Colonic mucosa (tissue), 4 donors: ENCODE measurements at regions of chr12 and their contacts with region 1.

Region 1: GRCh38 chr12:85476756-85477155 is 196.7 kb downstream of the ALX1 start:
- DNase-seq: no peak
- H3K4me3 ChIP-seq: no peak overlapping the region
- H3K27ac ChIP-seq: no peak overlapping the region
- H3K4me1 ChIP-seq: no peaks in the 10 kb centered on the region
- H3K27me3 ChIP-seq: no peaks in the 10 kb centered on the region
- CTCF ChIP-seq: no peak

Region 2: DNA sequence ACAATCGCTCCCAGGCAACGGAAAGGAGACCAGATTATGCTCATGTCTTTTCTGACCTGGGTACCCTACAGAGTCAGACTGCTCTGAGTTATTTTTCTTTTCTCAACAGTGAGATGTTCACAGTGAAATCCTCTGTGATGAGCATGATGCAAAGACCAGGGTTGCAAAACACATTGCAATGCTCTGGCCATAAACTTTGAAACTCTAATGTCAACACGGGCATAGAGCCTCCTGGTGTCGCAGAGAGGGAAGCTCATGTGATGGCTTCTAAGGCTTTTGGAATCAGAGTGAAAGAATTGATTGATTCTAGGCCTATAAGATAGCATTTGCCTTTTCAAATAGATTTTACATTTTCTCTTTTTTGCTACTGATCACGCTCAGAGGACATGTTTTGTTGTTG is 166.1 kb after region 1 on chr12:
- intact Hi-C with region 1: loop called (anchors 5 kb)
- DNase-seq: no peak
- H3K4me3 ChIP-seq: no peak overlapping the region
- H3K27ac ChIP-seq: no peak overlapping the region
- H3K4me1 ChIP-seq: no peaks in the 10 kb centered on the region
- H3K27me3 ChIP-seq: no peaks in the 10 kb centered on the region
- CTCF ChIP-seq: no peak